ENCODE measurements at regions of chr17 and their contacts with region 1.

Region 1: DNA sequence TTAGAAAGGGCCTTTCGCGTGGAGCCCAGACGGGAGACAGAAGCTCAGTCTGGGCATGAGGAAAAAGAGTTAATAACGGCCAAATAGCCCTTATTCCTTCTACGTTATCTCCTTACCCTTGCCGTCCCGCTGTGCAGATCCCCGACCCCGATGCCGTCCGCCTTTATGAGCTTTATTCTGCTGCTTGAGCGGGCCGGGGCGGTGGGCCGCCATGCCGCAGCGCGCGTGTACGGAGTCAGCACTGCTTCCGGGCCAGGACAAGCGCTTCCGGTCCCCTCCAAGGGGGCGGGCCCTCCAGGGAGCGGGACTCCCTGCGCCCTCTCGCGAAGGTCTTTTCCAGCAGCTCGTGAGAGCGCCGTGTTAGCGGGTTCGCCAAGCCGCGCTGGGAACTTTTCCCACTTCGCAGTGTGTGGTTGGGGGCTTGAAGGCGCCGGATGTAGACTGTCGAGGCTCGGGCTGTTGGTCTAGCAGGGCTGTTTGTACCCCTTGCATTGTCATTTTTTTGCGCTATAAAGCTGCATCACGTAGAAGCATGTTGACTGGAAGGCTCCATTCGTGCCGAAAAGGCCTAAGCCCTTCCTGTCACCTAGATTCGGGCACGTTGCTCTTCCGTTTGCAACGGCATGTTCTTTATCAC is at the start of gene TSR1:
- DNase-seq: peak; percentile 74 to 87 (median 82)
- H3K4me3 ChIP-seq: peak within 1 kb of the TSS; percentile 84 to 91 (median 88)
- H3K4me3 Mint-ChIP-seq: peak within 1 kb of the TSS; percentile 95 to 97
- H3K27ac ChIP-seq: peak within 1 kb of the TSS; percentile 34 to 73
- H3K27ac Mint-ChIP-seq: peak within 1 kb of the TSS; percentile 70 to 94 (median 86)
- H3K4me1 ChIP-seq: peaks cover 20 to 25% of the 10 kb centered on the region in 2 donors
- H3K4me1 Mint-ChIP-seq: peaks cover 15% of the 10 kb centered on the region
- H3K27me3 ChIP-seq: no peaks in the 10 kb centered on the region
- H3K27me3 Mint-ChIP-seq: peaks cover 0 to 4% (median 0%) of the 10 kb centered on the region in 3 donors
- CTCF ChIP-seq: peak; percentile 17
- polyA plus RNA-seq, gene TSR1: 8.1 to 10.8 (median 9.3) TPM

Region 2: GRCh38 chr17:2303204-2304188 is 32.8 kb before region 1 on chr17 and contains the starts of genes SMG6 and SRR:
- intact Hi-C with region 1: loop called in 1 of 2 experiments (anchors 5 kb)
- DNase-seq: peak; percentile 80 to 89 (median 89)
- H3K4me3 ChIP-seq: peak within 1 kb of the TSS; percentile 76 to 97 (median 95)
- H3K4me3 Mint-ChIP-seq: peak within 1 kb of the TSS; percentile 85 to 89
- H3K27ac ChIP-seq: peak within 1 kb of the TSS; percentile 35 to 86
- H3K27ac Mint-ChIP-seq: peak within 1 kb of the TSS; percentile 54 to 87 (median 77)
- H3K4me1 ChIP-seq: peaks cover 14 to 27% of the 10 kb centered on the region in 2 donors
- H3K4me1 Mint-ChIP-seq: peaks cover 26% of the 10 kb centered on the region
- H3K27me3 ChIP-seq: no peaks in the 10 kb centered on the region
- H3K27me3 Mint-ChIP-seq: peaks cover 0 to 2% (median 1%) of the 10 kb centered on the region in 3 donors
- CTCF ChIP-seq: no peak
- polyA plus RNA-seq, gene SMG6: 0.67 to 7.1 (median 1.1) TPM
- polyA plus RNA-seq, gene SRR: 3.4 to 5.7 (median 3.7) TPM

Measured in CD14-positive monocyte (primary cell).